ENCODE measurements at regions of chr20 and their contacts with region 1.

Region 1: DNA sequence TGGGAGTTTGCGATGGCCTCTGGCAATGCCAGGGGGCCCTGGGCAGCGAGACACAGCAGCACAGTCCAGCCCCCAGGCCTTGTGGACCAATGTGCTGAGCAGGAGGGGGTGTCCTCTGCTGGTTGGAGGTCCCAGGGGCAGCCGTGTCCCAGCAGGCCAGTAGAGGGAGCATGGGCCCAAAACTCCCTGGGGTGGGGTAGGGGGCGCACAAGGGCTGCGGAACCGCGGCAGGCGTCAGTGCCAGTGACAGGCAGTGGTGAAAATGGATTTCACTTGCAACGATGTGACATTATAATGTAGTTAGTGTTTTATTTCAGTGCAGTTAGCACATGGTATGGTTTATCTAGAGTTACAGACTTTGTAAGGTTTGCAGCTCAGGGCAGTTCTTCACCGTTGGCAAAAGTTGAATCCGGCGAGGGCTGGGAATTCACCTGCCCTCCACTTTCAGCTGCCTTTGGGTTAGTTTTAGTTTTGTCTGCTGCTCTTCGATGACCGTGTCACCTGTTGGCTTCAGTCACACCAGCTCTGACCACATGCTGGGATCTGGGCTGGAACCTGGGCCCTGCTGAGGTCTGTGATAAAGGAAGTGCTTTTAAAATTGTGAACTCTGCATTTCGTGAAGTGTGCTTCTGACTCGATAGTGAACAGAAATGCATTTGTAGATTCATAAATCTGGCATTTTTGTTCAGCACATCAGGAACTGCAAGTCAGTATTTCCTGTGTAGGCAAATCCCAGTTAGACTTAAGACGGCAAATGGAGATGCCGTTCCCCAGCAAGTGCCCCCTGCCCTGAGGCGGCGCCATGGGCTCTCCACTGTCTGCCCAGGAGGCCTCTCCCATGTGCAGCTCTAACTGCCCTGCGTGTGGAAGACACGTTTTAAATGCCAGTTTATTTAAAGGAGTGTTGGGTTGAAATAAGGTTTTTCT is 46.8 kb downstream of the PYGB start:
- DNase-seq: peak; percentile 76 to 88
- ATAC-seq: peak; percentile 57 to 85
- H3K4me3 ChIP-seq: no peak overlapping the region
- H3K27ac ChIP-seq: peak overlapping the region in 1 of 2 experiments; percentile 79; a peak in 4 of 6 replicates
- H3K4me1 ChIP-seq: peaks cover 48% of the 10 kb centered on the region
- CTCF ChIP-seq: peak; percentile 96
- EP300 ChIP-seq: no peak
- POLR2A ChIP-seq: no peak
- RAD21 ChIP-seq: peak; percentile 85 to 89

Region 2: DNA sequence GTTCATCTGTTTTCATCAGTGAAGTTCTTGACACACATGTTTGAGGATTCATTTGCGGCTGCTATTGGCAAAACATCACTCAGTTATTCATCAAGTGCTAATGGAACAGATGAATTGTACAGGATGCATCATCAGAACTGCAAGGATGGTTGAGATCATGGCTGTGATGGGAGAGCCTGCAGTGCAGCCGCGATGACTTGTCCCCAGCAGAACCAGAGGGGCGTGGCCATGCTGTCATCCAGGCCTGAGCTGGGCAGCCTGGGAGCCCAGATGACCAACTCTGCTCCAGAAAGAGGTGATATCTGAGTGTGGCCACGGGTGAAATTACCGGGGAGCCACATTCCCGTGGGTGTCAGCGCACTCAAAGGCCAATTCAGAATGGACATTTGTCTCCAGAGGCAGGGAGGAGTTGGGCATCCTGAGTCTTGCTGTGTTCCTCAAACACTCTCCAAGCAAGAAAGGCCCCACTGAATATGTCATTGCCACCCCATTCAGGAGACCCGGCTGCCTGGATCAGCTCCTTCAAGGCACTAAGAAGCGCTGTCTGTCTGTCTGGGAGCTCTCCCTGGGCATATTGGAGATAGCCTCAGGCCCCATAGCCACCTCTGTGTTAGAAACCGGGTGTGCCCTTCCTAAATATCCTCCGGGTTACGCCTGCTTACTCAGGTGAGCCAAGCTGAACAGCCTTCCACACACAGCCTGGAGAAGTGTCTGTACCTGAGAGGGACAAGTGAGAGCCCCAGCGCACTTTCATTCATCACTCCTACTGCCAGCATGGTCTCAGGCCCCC is 758.6 kb before region 1 on chr20:
- CTCF ChIA-PET with region 1: no interaction called
- POLR2A ChIA-PET with region 1: no interaction called
- DNase-seq: no peak
- ATAC-seq: no peak
- H3K4me3 ChIP-seq: no peak overlapping the region
- H3K27ac ChIP-seq: no peak overlapping the region
- H3K4me1 ChIP-seq: no peaks in the 10 kb centered on the region
- CTCF ChIP-seq: no peak
- EP300 ChIP-seq: no peak
- POLR2A ChIP-seq: no peak
- RAD21 ChIP-seq: no peak

Region 3: GRCh38 chr20:25223179-25223661 is 71.5 kb before region 1 on chr20:
- CTCF ChIA-PET with region 1: interaction called, 17 read pairs
- POLR2A ChIA-PET with region 1: no interaction called
- DNase-seq: peak; percentile 92 to 97
- ATAC-seq: peak; percentile 88
- H3K4me3 ChIP-seq: no peak overlapping the region
- H3K27ac ChIP-seq: peak overlapping the region; percentile 79 to 88
- H3K4me1 ChIP-seq: peaks cover 67% of the 10 kb centered on the region
- CTCF ChIP-seq: peak; percentile 47
- EP300 ChIP-seq: peak in 1 of 2 experiments; percentile 39; a peak in 1 of 5 replicates
- POLR2A ChIP-seq: no peak
- RAD21 ChIP-seq: peak; percentile 66 to 67

Region 4: DNA sequence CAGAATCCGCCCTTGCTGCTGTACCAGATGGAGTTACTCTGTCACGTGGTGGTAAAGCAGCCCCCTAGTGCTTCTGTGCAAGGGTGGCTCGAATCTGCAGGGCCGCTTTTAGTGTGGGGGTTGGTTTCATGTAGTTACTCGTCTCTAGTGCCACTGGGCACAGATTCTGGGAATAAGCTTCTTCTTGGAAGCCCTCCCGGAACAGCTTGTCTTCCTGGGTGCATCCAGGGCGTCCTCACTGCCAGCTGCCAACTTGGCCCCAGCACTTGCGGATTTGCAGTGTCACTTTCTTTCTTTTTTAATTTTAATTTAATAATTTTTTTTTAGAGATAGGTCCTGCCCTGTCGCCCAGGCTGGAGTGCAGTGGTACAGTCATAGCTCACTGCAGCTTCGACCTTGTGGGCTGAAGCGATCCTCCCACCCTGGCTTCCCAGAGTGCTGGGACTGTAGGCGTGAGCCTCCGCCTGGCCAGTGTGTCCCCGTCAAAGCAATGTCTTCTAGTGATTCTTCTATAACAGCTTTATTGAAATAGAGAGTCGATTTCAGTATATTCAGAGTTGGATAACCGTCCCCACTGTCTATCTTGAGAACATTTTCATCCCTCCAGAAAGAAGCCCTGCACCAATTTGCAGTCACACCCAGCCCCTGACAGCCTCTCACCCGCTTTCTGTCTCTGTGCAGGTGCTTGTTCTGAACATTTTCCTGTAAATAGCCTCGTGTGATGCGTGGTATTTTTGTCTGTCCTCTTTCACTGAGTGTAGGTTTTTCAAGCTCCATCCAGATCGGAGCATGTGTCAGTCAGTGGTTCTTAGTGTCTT is 21.0 kb before region 1 on chr20:
- CTCF ChIA-PET with region 1: interaction called, 42 read pairs
- POLR2A ChIA-PET with region 1: no interaction called
- DNase-seq: no peak
- ATAC-seq: no peak
- H3K4me3 ChIP-seq: no peak overlapping the region
- H3K27ac ChIP-seq: no peak overlapping the region; a peak in 1 of 6 replicates
- H3K4me1 ChIP-seq: no peaks in the 10 kb centered on the region; the same call in 2 of the 3 replicates
- CTCF ChIP-seq: no peak
- EP300 ChIP-seq: no peak
- POLR2A ChIP-seq: no peak
- RAD21 ChIP-seq: no peak

Region 5: GRCh38 chr20:25310268-25310920 is 15.7 kb after region 1 on chr20:
- CTCF ChIA-PET with region 1: interaction called, 47 read pairs
- POLR2A ChIA-PET with region 1: interaction called, 21 read pairs
- DNase-seq: peak; percentile 95 to 97
- ATAC-seq: peak; percentile 75 to 87
- H3K4me3 ChIP-seq: peak overlapping the region; percentile 26
- H3K27ac ChIP-seq: peak overlapping the region; percentile 97 to 98
- H3K4me1 ChIP-seq: peaks cover 71% of the 10 kb centered on the region
- CTCF ChIP-seq: peak; percentile 67
- EP300 ChIP-seq: peak; percentile 70 to 78; a peak in 2 of 5 replicates
- POLR2A ChIP-seq: no peak
- RAD21 ChIP-seq: peak; percentile 81 to 83

Region 6: GRCh38 chr20:25390538-25391528 is 96.1 kb after region 1 on chr20 and contains the start of gene ABHD12:
- CTCF ChIA-PET with region 1: interaction called, 135 read pairs
- POLR2A ChIA-PET with region 1: interaction called, 3 read pairs
- DNase-seq: peak; percentile 96 to 97
- ATAC-seq: peak; percentile 95 to 98
- H3K4me3 ChIP-seq: peak within 1 kb of the TSS; percentile 95
- H3K27ac ChIP-seq: peak within 1 kb of the TSS; percentile 78 to 90
- H3K4me1 ChIP-seq: peaks cover 3% of the 10 kb centered on the region; the same call in 1 of the 3 replicates
- CTCF ChIP-seq: no peak
- EP300 ChIP-seq: no peak
- POLR2A ChIP-seq: peak; percentile 93
- RAD21 ChIP-seq: peak in 1 of 2 experiments; percentile 20; a peak in 1 of 5 replicates
- polyA plus RNA-seq, gene ABHD12: 54.3 and 59.1 TPM in 2 replicates

Region 7: DNA sequence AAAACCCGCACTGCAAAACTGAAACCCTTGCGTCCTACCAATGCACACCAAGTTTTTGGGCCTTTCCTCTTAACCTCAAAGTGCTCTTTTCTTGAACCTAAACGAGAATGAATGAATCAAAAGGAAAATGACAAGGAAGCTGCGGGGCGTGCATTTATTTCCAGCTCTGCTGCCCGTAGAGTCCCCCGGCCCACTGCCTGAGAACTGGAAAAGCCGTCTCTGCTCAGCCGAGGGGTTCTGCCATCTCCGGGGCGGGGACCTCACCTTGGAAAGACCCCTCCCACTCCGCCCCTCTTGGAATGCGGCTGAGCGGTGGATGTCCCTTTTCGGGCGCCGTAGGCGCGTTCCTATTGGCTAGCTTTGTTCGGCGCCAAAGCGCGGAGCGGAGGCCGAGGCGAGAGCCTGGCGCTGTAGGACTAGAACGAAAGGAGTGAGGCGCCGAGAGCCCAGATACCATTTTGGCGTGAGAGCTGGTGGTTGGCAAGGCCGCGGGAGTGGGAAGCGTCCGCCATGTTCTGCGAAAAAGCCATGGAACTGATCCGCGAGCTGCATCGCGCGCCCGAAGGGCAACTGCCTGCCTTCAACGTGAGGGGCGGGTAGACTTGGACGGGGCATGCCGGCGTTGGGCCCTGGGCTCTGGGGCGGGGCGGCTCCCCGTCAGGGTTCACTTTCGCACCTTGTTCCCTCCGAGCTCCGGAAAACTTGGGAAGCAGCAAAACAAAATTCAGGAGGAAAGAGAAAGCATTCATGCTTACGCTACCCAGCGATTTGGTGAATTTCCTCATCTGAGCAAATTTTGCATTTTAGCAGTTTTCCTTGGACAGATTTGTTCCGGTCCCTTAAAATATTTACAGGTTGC is 112.8 kb after region 1 on chr20 and contains the start of gene GINS1:
- CTCF ChIA-PET with region 1: interaction called, 72 read pairs
- POLR2A ChIA-PET with region 1: no interaction called
- DNase-seq: peak; percentile 96 to 98
- ATAC-seq: peak; percentile 96 to 97
- H3K4me3 ChIP-seq: peak within 1 kb of the TSS; percentile 81
- H3K27ac ChIP-seq: peak within 1 kb of the TSS; percentile 85 to 90
- H3K4me1 ChIP-seq: peaks cover 17% of the 10 kb centered on the region
- CTCF ChIP-seq: no peak
- EP300 ChIP-seq: no peak
- POLR2A ChIP-seq: peak; percentile 67
- RAD21 ChIP-seq: no peak
- polyA plus RNA-seq, gene GINS1: 33.5 and 46.4 TPM in 2 replicates